ENCODE measurements at regions of chr22 and their contacts with region 1.

Region 1: DNA sequence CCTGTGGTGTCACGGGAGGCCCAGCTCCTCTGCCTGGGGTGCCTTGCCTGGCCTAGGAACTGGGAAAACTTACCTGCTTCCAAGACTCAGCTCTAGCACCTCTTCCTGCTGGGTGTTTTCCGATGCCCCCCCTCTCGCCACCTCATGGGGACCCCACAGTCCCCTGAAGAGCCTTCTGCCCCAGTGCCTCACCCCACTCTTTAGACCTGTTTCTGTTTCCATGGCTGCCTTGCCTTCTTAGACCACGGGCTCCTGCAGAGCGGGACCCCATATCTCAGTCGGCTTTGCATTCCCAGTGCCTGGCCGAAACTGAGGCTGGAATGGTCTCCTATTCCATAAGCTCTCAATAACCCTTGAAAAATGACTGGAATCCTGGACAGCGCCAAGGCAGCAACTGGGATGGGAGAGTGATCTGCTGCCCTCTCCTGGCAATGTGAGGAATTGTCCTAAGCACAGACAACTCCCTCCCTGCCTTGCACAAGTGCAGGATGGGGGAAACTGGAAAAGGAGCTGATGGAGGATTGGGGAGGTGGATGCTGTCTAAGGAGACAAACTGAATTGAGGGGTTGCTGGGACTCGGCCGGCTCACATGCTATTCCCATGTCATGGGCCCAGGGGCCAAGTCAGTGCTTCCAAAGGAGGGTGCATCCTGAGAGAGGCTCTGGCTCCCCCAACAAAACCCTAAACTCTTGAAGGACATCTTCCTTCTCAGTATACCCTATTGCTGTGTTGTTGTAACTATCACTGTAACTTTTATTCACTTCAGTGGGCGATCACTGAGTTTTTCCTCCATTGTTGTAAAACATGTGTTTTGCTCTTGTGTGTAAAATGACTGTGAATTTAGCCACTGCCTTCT is 26.6 kb upstream of the IL17RA start:
- DNase-seq: no peak
- H3K4me3 ChIP-seq: no peak overlapping the region
- CTCF ChIP-seq: peak; percentile 99

Region 2: DNA sequence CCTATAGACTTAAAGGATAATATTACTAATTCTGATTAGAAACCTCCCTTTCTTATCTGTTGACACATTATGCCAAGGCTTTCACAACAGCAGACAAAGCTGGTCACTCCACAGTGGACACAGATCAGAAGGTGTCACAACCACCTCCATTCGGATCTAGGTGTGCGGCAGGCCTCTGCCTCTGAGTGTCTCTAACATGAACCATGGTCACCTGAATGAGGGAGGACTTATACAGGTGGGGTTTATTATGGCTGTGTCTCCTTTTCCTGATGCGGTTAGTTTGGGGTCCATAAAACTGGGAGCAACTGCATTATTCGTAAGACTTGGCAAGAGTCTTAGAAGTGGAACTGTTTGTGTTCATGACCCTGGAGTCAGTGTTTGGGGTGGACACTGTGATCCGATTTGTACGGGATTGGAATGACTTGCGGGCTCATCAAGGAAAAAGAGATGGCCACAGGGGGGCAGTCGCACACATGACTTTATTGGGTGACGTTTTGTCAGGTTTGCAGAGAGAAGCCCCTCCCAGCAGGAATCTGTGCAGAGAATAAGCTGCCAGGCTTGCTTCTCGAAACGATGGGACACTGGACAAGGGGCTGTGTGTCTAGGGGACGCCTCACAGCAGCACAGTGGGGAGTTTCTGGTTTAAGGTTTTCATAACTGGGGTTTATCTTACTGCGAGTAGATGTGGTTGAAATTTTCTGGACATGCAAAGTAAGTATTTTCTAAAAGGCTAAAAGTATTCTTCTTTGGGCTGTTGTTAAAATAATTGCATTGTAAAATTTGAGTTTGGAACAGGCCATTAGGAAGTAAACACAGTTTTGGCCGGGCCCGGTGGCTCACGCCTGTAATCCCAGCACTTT is 140.8 kb before region 1 on chr22:
- CTCF ChIA-PET with region 1: interaction called, 61 read pairs
- POLR2A ChIA-PET with region 1: no interaction called
- DNase-seq: no peak
- H3K4me3 ChIP-seq: no peak overlapping the region
- CTCF ChIP-seq: peak; percentile 38

Region 3: DNA sequence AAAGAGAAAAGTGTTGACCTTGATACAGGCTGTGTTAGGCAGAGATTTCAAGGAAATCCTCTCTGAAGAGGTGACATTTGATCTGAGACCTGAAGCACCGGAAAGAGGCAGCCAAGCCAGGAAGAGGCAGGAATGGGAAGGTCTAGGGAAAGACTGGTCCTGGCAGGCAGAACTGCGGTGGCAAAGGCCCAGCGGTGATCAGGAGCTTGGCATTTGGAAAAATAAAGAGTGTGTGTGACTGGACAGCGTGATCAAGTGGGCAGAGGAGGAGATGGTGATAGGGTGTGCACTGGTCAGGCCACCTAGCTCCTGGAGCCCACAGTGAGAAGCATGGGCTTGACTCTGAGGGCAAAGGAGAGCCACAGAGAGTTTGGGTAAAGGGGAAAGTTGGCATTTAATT is 22.9 kb before region 1 on chr22:
- CTCF ChIA-PET with region 1: interaction called, 23 read pairs
- POLR2A ChIA-PET with region 1: no interaction called
- DNase-seq: no peak
- H3K4me3 ChIP-seq: no peak overlapping the region
- CTCF ChIP-seq: no peak

Region 4: DNA sequence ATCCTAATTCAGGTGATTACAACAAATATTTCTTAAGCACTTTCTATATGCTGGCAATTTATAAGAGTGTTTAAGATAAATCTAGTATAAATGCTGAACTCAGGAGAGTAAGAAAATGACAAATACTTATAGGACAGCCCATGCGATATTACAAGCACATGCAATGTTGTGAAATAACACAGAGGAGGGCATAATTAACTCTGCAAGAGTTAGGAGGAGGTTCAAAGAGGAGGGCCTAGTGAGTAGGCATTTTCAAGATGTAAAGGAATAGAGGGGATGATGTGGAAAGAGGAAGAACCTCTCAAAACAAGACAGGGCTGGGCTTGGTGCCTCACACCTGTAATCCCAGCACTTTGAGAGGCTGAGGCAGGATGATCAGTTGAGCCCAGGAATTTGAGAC is 10.5 kb before region 1 on chr22:
- CTCF ChIA-PET with region 1: interaction called, 25 read pairs
- POLR2A ChIA-PET with region 1: no interaction called
- DNase-seq: no peak
- H3K4me3 ChIP-seq: no peak overlapping the region
- CTCF ChIP-seq: no peak

Region 5: DNA sequence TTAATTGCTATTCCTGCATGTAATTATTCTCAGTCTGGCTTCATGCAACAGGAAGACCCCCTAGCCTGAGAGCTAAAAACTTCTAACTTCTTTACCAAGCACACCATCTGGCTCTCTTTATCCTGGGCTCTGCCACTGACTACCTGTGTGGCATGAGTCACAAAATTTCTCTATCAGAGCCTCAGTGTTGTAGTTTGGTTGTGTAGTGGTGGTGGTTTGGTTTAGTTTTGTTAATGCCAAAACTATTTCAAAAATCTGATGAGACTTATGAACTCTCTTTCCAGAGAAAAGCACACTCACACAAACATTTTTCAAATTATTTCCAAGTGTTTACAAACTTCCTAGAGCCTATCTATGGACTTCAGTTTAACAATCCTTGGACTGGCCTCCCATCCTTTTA is 19.1 kb after region 1 on chr22:
- CTCF ChIA-PET with region 1: interaction called, 58 read pairs
- POLR2A ChIA-PET with region 1: no interaction called
- DNase-seq: peak; percentile 49
- H3K4me3 ChIP-seq: no peak overlapping the region
- CTCF ChIP-seq: no peak

Region 6: DNA sequence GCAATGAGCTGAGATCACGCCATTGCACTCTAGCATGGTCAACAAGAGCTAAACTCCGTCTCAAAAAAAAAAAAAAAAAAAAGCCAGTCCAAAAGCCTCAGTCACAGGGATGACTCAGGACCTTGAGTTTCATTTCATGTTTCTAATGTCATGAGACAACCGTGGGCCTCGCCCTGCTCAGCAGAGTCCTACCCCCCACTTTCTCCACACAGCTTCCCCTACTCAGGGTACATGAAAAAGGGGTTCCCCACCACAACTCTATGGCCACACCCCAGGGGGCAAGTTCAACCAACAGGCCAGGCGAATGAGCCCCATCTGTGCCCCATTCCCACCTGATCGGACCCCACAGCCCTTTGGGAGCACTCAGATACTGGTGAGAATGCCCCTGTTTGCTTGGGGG is 185.3 kb after region 1 on chr22:
- CTCF ChIA-PET with region 1: no interaction called
- POLR2A ChIA-PET with region 1: no interaction called
- DNase-seq: no peak
- H3K4me3 ChIP-seq: no peak overlapping the region
- CTCF ChIP-seq: no peak

Region 7: DNA sequence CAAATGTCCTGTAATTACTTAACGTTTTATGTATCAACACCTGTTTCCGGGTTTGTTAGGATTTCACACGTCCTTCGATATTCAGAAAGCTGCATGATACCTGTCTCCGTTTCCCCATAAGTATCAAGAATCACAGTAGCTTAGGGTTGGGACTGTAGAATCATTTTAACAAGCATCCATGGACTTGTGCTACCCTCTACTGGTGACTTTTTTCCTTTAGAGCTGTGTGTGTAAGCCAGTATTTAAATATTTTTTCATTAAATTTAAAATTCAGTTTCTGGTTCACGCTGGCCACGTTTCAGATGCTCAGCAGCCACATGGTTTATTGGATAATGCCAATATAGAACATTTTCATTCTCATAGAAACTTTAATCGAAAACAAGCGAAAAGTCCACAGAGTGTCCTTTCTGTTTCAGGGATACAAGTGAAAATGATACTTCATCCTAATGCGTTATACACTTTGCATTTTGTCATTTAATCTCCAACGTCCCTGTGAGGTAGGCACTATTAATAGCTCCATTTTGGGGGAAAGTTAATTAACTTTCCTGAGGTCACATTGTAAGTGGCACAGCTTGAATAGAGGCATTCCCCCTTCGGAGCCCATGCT is 443.6 kb after region 1 on chr22:
- CTCF ChIA-PET with region 1: interaction called, 16 read pairs
- POLR2A ChIA-PET with region 1: no interaction called
- DNase-seq: peak; percentile 19
- H3K4me3 ChIP-seq: no peak overlapping the region
- CTCF ChIP-seq: peak; percentile 30